Esophagus squamous epithelium (tissue), 5 donors: ENCODE measurements at regions of chr7 and their contacts with region 1.

Region 1: DNA sequence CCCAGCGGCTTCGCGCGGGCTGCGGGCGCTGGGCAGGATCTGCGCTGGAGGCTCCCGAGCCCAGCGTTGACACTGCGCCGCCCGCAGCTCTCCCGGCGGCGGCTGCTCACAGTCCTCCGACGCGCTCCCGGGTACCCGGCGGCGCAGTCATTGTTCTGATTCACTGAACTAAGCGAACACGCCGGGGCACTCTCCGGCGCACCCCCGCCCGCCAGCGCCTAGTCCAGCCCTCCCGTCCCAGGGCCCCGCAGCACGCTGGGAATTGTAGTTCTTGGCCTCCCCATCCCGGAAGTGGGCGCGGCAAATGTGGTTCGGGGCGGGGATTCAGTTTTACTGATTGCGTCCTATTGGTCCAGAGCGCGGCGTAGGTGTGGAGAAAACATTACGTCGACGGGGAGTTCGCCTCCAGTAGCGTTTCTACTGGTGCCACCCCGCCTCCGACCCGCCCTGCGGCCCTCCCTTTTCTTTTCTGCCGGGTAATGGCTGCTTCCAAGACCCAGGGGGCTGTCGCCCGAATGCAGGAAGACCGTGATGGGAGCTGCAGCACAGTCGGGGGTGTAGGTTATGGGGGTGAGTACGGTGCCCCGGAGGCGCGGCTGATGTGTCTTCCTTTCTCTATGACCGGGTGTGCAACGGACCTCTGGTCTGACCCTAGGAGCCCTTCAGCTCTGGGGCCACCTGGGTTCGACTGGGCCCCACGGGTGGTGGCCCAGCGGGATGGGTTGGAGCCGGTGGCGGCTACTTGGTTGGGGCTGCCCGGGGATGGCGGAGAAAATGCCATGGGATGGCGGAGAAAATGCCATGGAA is at the starts of genes DOCK4 and ZNF277:
- DNase-seq: peak; percentile 97
- H3K4me3 ChIP-seq: peak within 1 kb of the TSS; percentile 77 to 99 (median 80)
- H3K27ac ChIP-seq: peak within 1 kb of the TSS; percentile 83 to 94 (median 90)
- H3K4me1 ChIP-seq: peaks cover 6 to 54% (median 12%) of the 10 kb centered on the region in 3 donors
- H3K27me3 ChIP-seq: no peaks in the 10 kb centered on the region
- CTCF ChIP-seq: peak in 3 of 6 experiments; percentile 4 to 35 (median 5)
- POLR2A ChIP-seq: peak in 3 of 4 donors; percentile 83 to 93 (median 91)
- total RNA-seq, gene DOCK4: 9.9 to 30.9 (median 13.7) TPM
- total RNA-seq, gene ZNF277: 7.3 to 32.0 (median 19.6) TPM

Region 2: DNA sequence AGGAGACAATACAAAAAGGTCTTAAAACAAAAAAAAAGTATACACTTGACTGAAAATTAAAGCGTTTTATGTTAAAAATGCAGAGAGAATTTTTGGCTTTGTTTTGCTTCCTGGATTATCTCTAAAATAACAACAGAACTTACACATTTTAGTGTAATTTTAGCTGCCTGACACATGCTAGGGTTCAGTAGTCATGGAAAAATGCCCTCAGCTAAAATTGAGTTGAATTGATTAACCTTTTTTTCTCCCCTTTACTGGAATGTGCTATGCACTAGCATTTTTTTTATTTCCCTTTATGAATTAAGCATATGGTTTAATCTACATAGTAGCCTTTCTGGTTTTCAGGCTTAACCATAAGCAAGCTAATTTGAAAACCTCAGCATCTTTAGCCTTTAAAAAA is 90.0 kb after region 1 on chr7:
- intact Hi-C with region 1: no loop called
- DNase-seq: no peak
- H3K4me3 ChIP-seq: no peak overlapping the region
- H3K27ac ChIP-seq: no peak overlapping the region
- H3K4me1 ChIP-seq: no peaks in the 10 kb centered on the region
- H3K27me3 ChIP-seq: no peaks in the 10 kb centered on the region
- CTCF ChIP-seq: no peak
- POLR2A ChIP-seq: no peak

Region 3: DNA sequence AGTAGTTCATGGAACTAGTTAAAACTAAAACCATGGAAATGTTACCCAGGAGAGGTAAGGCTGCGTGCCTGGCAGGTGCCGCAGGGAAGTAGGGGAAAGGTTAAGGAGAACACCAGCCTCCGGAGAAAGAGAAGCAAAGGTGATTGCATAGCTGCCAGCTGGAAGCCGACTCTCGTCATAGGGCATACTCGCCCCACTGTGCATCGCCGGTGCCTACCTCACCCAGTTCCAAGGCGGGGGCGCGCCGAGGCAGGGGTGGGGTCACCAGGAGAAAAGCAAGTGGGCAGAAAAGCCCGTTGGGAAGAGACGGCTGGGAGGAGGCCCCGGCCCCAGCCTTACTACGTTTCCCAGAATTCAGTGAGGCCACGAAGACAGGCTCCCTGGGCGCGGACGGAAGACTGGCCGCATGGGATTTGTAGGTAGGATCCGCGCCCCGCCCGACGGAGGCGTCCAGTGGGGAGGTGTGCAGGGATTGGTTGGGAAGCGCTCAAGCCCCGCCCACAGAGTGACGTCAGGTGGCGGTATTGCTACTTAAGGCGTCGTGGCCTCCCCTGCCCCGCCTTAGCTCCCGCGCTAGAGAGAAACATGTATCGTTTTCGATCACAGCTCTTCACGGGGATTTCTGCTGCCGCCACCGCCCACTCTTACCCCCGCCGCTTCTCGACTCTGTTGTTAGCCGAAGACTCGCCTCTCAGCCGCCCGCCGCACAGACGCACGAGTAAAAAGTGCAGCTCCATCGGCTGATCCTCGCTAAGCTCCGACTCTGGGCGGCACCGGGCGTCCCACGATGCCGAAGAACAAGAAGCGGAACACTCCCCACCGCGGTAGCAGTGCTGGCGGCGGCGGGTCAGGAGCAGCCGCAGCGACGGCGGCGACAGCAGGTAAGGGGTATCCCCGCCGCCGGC is 243.7 kb after region 1 on chr7 and contains the start of gene IFRD1:
- intact Hi-C with region 1: loop called (anchors 10 kb)
- DNase-seq: peak; percentile 94
- H3K4me3 ChIP-seq: peak within 1 kb of the TSS; percentile 87 to 100 (median 92)
- H3K27ac ChIP-seq: peak within 1 kb of the TSS; percentile 98 to 100 (median 99)
- H3K4me1 ChIP-seq: peaks cover 10 to 56% (median 18%) of the 10 kb centered on the region in 3 donors
- H3K27me3 ChIP-seq: no peaks in the 10 kb centered on the region
- CTCF ChIP-seq: peak in 1 of 6 experiments; percentile 19
- POLR2A ChIP-seq: peak in 3 of 4 donors; percentile 60 to 99 (median 99)
- total RNA-seq, gene IFRD1: 19.4 to 52.1 (median 31.1) TPM